Heart left ventricle (tissue), 16 donors: ENCODE measurements at regions of chr16 and their contacts with region 1.

Region 1: GRCh38 chr16:87492721-87493607 is at the start of gene ZCCHC14:
- DNase-seq: peak; percentile 100
- ATAC-seq: peak; percentile 99 to 100 (median 100)
- H3K4me3 ChIP-seq: peak within 1 kb of the TSS; percentile 29 to 77 (median 58)
- H3K27ac ChIP-seq: peak within 1 kb of the TSS; percentile 30 to 90 (median 61)
- H3K4me1 ChIP-seq: peaks cover 7 to 49% (median 37%) of the 10 kb centered on the region in 12 donors
- H3K27me3 ChIP-seq: no peaks in the 10 kb centered on the region
- CTCF ChIP-seq: no peak
- POLR2A ChIP-seq: peak; percentile 13 to 86
- total RNA-seq, gene ZCCHC14: 9.2 to 18.4 (median 16.4) TPM

Region 2: GRCh38 chr16:87387942-87388817 is 104.8 kb before region 1 on chr16:
- intact Hi-C with region 1: loop called in 1 of 10 experiments (anchors 2 kb)
- DNase-seq: peak; percentile 90 to 96 (median 96)
- ATAC-seq: peak; percentile 71 to 88 (median 82)
- H3K4me3 ChIP-seq: peak overlapping the region in 9 of 12 donors; percentile 22 to 42 (median 29)
- H3K27ac ChIP-seq: peak overlapping the region; percentile 80 to 96 (median 90)
- H3K4me1 ChIP-seq: peaks cover 6 to 45% (median 29%) of the 10 kb centered on the region in 12 donors
- H3K27me3 ChIP-seq: no peaks in the 10 kb centered on the region
- CTCF ChIP-seq: no peak
- POLR2A ChIP-seq: peak in 1 of 2 donors; percentile 66

Region 3: DNA sequence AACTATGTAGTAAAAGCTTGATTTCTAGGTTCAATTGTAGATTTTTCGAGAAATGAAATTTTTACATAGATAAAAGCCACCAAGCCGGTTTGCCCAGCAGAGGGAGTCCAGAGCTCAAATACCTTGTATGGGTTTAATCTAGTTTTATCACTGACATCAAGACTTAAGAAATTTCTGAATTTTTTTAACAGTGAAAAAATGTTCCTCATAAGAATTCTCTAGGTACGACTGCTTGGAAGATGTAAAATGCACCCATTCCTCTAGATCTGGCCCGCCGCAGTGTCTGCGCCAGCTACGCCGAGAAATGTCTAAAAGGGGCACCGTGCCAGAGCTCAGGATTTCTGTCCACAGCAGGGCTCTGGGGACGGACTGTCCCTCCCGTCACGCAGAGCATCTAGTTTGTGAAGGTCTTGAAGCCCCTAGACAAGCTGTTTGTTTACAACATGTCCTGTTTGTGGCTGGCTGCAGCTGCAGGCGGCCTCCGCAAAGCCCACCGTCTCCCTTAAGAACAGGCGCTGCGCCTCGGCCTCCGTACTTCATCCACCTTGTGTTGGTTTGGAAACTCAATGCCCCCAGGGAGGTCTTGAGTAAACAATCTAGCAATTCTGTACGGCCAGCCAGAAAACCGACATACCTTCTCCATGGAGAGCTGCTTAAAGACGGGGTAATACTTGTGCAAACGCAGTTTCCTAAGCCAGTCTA is 76.0 kb before region 1 on chr16:
- intact Hi-C with region 1: loop called in 2 of 10 experiments (anchors 5 to 10 kb)
- DNase-seq: no peak
- ATAC-seq: no peak
- H3K4me3 ChIP-seq: no peak overlapping the region
- H3K27ac ChIP-seq: no peak overlapping the region
- H3K4me1 ChIP-seq: peaks cover 0 to 6% (median 0%) of the 10 kb centered on the region in 12 donors
- H3K27me3 ChIP-seq: no peaks in the 10 kb centered on the region
- CTCF ChIP-seq: peak; percentile 49 to 79 (median 66)
- POLR2A ChIP-seq: no peak

Region 4: GRCh38 chr16:87435372-87436224 is 57.4 kb before region 1 on chr16:
- intact Hi-C with region 1: loop called in 3 of 10 experiments (anchors 5 to 10 kb)
- DNase-seq: no peak
- ATAC-seq: peak; percentile 50 to 83 (median 69)
- H3K4me3 ChIP-seq: peak overlapping the region in 8 of 12 donors; percentile 10 to 32 (median 25)
- H3K27ac ChIP-seq: peak overlapping the region; percentile 56 to 79 (median 68)
- H3K4me1 ChIP-seq: peaks cover 3 to 49% (median 27%) of the 10 kb centered on the region in 12 donors
- H3K27me3 ChIP-seq: no peaks in the 10 kb centered on the region
- CTCF ChIP-seq: no peak
- POLR2A ChIP-seq: no peak

Region 5: GRCh38 chr16:87457709-87458423 is 35.1 kb before region 1 on chr16:
- intact Hi-C with region 1: loop called in 1 of 10 experiments (anchors 5 kb)
- DNase-seq: no peak
- ATAC-seq: peak in 1 of 4 donors; percentile 45
- H3K4me3 ChIP-seq: no peak overlapping the region
- H3K27ac ChIP-seq: peak overlapping the region in 4 of 12 donors; percentile 8 to 44 (median 18)
- H3K4me1 ChIP-seq: peaks cover 6 to 42% (median 26%) of the 10 kb centered on the region in 12 donors
- H3K27me3 ChIP-seq: no peaks in the 10 kb centered on the region
- CTCF ChIP-seq: no peak
- POLR2A ChIP-seq: no peak

Region 6: DNA sequence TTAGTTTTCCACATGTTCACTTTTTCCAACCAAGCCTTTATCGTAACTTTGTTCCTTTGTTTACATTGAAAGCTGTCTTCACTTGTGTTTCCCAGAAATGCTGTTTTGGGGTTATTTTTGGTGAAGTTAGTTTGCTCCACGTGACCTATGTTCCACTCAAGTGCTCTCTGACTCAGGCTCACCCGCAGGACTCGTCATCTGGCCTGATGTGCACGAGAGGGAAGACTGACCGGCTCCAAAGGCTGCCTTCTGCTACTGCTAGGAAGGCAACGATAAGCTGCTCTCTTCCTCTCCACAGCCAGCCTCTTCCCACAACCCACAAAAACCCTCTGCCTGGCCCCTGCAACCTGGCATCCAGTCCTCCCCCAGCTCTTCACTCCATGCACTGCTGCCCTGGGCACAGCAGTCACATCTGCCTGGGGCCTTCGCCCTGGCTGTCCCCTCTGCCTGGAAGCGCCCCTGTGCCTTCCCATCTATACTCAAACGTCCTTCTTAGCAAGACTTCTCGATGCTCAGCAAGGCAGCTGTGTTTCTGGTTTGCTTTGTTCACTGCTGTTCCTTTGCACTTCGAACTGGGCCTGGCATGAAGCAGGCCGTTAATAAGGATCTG is 28.2 kb before region 1 on chr16:
- intact Hi-C with region 1: loop called in 2 of 10 experiments (anchors 2 to 5 kb)
- DNase-seq: peak; percentile 68 to 84 (median 82)
- ATAC-seq: peak; percentile 71 to 90 (median 86)
- H3K4me3 ChIP-seq: peak overlapping the region in 8 of 12 donors; percentile 10 to 31 (median 16)
- H3K27ac ChIP-seq: peak overlapping the region; percentile 84 to 96 (median 90)
- H3K4me1 ChIP-seq: peaks cover 30 to 83% (median 69%) of the 10 kb centered on the region in 12 donors
- H3K27me3 ChIP-seq: no peaks in the 10 kb centered on the region
- CTCF ChIP-seq: no peak
- POLR2A ChIP-seq: no peak

Region 7: DNA sequence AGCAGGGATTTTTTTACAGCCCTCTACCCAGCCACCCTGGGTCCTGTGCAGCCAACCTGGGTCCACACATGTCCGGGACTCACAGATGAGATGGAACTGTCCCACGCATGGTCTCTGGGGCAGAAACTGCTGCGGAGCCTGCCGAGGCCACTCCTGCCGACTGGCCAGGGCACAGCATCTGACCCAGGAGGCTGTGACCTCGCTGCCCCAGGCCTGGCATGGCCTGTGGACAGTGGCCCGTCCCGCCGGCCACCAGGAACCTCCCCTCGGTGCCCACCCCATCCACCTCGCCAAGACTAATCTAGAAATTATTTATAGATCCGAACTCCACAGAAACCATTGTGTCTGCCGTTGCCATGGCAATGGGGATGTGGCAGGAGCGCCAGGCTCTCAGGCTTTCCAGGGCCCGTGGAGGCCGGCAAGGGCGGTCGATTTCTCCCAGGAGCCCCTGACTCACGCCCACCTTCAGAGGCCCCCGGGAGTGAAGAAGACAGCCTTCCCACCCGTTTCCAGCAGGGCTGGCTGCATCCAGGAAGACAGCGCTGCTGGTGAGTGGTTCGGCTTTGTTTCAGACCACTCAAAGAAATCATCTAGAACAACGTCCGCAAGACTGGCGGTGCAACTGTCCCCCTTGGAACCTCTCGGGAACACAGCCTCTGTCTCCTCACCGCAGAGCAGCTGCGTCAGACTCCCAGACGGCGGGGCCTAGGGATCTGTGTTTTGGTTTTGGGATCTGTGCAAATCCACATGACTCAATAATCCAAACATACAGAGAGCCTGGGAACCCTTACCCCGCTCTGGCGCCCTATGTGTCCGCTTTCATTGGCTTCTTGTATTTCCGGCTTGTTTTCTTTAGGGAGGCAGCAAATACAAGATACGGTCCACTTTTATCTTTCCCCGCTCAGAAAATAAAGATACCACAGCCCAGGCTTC is 48.2 kb after region 1 on chr16:
- intact Hi-C with region 1: loop called in 1 of 10 experiments (anchors 2 kb)
- DNase-seq: peak; percentile 44 to 80 (median 70)
- ATAC-seq: peak; percentile 47 to 79 (median 65)
- H3K4me3 ChIP-seq: peak overlapping the region in 8 of 12 donors; percentile 11 to 48 (median 25)
- H3K27ac ChIP-seq: peak overlapping the region; percentile 34 to 69 (median 56)
- H3K4me1 ChIP-seq: peaks cover 0 to 26% (median 11%) of the 10 kb centered on the region in 12 donors
- H3K27me3 ChIP-seq: peaks cover 0 to 7% (median 0%) of the 10 kb centered on the region in 9 donors
- CTCF ChIP-seq: no peak
- POLR2A ChIP-seq: no peak